ENCODE measurements at regions of chr3 and their contacts with region 1.

Region 1: DNA sequence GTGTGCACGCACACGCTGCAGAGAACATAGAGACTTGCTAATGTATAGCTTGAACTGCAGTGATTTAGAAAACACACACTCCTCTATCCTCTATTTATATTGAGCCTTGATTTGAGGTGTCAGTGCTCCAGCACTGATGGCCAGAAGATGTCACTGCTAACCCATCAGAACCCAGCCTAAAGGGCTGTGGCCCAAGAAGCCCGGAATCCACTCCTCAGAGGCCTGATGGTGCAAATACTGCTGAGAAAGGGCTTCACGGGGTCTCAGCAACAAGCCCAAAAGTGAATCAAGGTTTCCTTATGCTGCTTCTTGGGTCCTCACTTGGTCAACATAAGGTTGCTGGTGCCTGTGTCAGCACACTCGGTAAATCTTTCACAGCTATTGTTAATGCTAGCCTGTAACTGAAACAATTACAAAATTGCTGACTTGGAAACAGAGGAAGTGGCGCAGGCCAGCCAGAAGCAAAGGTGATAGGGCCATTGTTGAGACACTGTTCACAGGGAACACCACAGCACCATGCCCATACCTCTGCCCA is 60.3 kb downstream of the HEG1 start:
- H3K4me3 ChIP-seq: no peak overlapping the region
- H3K27ac ChIP-seq: no peak overlapping the region
- H3K4me1 ChIP-seq: no peaks in the 10 kb centered on the region
- CTCF ChIP-seq: no peak

Region 2: GRCh38 chr3:125585595-125586223 is 590.2 kb after region 1 on chr3:
- CTCF ChIA-PET with region 1: interaction called, 15 read pairs
- POLR2A ChIA-PET with region 1: no interaction called
- H3K4me3 ChIP-seq: no peak overlapping the region
- H3K27ac ChIP-seq: no peak overlapping the region
- H3K4me1 ChIP-seq: peaks cover 3% of the 10 kb centered on the region
- CTCF ChIP-seq: peak; percentile 51